MCF 10A (cell line): ENCODE measurements at regions of chr11 and their contacts with region 1.

Region 1: GRCh38 chr11:9757809-9758636 is 94.1 kb downstream of the SWAP70 start:
- DNase-seq: peak; percentile 64
- H3K4me3 Mint-ChIP-seq: peak overlapping the region; percentile 70
- H3K27ac Mint-ChIP-seq: peak overlapping the region; percentile 68
- H3K4me1 Mint-ChIP-seq: peaks cover 69% of the 10 kb centered on the region
- H3K27me3 Mint-ChIP-seq: no peaks in the 10 kb centered on the region
- CTCF ChIP-seq: peak; percentile 87

Region 2: DNA sequence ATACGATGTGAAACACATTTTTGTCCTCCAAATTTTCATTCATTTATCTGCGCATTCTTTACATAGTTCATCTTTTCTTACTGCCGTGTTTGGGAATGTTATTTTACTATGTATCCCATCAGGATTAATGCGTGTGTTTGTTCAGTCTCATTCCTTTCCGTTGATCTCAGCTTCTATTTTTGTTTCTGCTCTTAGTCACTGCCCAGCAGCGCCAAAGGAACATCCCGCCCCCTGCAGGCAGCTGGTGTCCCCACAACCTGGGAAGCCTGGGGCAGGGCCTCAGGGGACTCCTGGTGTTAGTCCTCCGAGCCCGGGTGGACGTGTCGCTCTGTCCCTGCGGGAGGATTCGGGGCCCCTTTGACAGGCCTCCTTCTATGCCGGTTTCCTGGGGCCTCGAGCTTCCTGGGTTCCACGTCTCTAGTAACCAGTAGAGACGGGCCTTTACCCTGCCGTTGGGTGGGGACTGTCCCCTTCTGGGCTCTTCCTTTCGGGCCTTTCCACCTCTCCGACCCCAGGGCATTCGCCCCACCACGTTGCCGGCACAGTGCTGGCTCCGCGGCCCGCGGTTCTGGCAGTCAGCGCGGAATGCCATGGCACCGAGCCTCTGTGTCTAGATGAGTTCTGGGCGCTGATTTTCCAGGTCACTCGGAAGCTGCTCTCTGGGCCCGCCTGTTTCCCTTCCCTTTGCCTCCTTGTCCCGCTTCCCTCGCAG is 144.7 kb before region 1 on chr11:
- CTCF ChIA-PET with region 1: interaction called, 19 read pairs
- POLR2A ChIA-PET with region 1: interaction called, 27 read pairs
- intact Hi-C with region 1: loop called (anchors 1 kb)
- DNase-seq: peak; percentile 94
- H3K4me3 Mint-ChIP-seq: peak overlapping the region; percentile 77
- H3K27ac Mint-ChIP-seq: peak overlapping the region; percentile 97
- H3K4me1 Mint-ChIP-seq: peaks cover 35% of the 10 kb centered on the region
- H3K27me3 Mint-ChIP-seq: no peaks in the 10 kb centered on the region
- CTCF ChIP-seq: peak; percentile 92

Region 3: GRCh38 chr11:9802291-9802861 is 44.4 kb after region 1 on chr11:
- CTCF ChIA-PET with region 1: interaction called, 11 read pairs
- POLR2A ChIA-PET with region 1: interaction called, 64 read pairs
- intact Hi-C with region 1: no loop called
- DNase-seq: peak; percentile 38
- H3K4me3 Mint-ChIP-seq: peak overlapping the region; percentile 6
- H3K27ac Mint-ChIP-seq: peak overlapping the region; percentile 97
- H3K4me1 Mint-ChIP-seq: peaks cover 12% of the 10 kb centered on the region
- H3K27me3 Mint-ChIP-seq: no peaks in the 10 kb centered on the region
- CTCF ChIP-seq: no peak

Region 4: DNA sequence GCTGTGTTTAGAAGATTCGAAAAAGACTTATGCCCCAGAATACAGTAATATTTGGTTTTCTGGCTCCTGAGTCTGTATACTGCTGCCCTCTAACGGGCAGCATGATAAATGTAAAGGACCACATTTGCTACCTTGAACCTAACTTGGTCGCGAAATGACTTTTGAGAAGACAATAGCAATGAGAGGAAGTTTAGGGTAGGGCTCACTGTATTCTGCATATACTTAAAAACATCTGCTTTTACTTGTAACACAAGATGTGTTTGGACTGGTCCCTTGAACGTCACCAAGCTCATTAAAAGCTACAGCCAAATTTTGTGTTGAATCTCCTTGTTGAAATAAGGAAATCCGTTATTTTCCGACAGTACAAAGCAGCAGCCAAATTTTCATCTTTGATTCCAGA is 215.0 kb after region 1 on chr11:
- CTCF ChIA-PET with region 1: interaction called, 47 read pairs
- POLR2A ChIA-PET with region 1: interaction called, 11 read pairs
- intact Hi-C with region 1: loop called (anchors 1 kb)
- DNase-seq: peak; percentile 60
- H3K4me3 Mint-ChIP-seq: no peak overlapping the region
- H3K27ac Mint-ChIP-seq: peak overlapping the region; percentile 8
- H3K4me1 Mint-ChIP-seq: peaks cover 6% of the 10 kb centered on the region
- H3K27me3 Mint-ChIP-seq: no peaks in the 10 kb centered on the region
- CTCF ChIP-seq: peak; percentile 76

Region 5: GRCh38 chr11:10208131-10208575 is 450.1 kb after region 1 on chr11:
- CTCF ChIA-PET with region 1: interaction called, 3 read pairs
- POLR2A ChIA-PET with region 1: no interaction called
- intact Hi-C with region 1: loop called (anchors 10 kb)
- DNase-seq: peak; percentile 58
- H3K4me3 Mint-ChIP-seq: no peak overlapping the region
- H3K27ac Mint-ChIP-seq: no peak overlapping the region
- H3K4me1 Mint-ChIP-seq: no peaks in the 10 kb centered on the region
- H3K27me3 Mint-ChIP-seq: no peaks in the 10 kb centered on the region
- CTCF ChIP-seq: peak; percentile 50

Region 6: DNA sequence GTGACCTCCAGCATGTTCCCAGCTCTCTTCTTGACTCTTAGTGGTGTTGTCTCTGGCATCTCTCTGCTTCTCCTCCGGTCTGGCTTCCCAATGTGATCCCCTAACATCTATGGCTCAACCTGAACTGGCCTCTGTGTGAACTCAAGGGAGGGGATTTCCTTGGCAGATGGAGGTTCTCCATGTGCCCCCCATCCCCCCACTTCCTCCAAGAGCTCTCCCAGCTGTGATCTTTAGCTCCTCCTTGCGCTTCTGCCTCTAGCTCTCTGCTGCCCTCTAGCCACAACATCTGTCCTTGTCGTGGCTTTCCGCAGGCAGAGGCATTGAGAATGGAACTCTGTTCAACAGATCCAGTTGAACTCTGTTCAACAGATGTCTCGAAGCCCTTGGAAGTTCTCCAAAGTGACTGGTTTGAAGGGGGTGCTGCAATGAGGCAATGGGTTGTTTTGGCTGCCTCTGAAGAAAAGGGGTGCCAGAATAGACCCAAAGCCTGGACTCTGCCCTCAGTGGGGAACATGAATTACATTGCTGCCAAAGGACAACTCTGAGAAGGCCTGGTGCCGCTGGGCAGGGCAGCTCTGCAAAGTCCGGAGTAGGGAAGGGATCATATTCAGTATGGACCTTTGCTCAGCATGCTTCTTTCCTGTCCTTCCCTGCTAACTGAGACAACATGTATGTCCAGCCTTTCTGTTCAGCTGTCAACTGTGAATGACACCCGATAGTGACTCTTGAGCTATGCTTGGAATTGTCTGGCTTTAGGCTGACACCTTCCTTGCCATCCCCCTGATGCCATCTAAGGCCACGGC is 608.7 kb after region 1 on chr11:
- CTCF ChIA-PET with region 1: no interaction called
- POLR2A ChIA-PET with region 1: no interaction called
- intact Hi-C with region 1: loop called (anchors 2 kb)
- DNase-seq: peak; percentile 89
- H3K4me3 Mint-ChIP-seq: no peak overlapping the region
- H3K27ac Mint-ChIP-seq: peak overlapping the region; percentile 72
- H3K4me1 Mint-ChIP-seq: peaks cover 10% of the 10 kb centered on the region
- H3K27me3 Mint-ChIP-seq: no peaks in the 10 kb centered on the region
- CTCF ChIP-seq: peak; percentile 78